Endothelial cell of umbilical vein (primary cell): ENCODE measurements at regions of chr13 and their contacts with region 1.

Region 1: DNA sequence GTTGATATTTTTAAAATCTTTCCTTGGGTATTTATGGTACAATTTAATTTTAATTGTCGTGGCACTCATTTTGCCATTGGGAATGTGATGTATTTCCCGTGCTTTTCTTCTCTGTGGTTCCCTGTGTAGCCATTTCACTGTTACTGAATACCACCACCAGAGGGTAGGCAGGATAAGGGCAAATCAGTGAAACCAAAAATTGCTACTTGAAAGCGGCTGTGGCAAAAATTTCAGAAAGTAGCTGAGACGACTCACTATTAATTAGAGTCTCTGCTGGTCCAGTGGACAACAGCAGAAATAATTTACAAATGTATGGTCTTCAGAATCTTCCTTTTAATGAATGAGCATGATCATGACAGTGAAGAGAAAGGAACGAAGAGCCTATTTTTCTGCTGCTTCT is 34.4 kb upstream of the MIR17HG start:
- DNase-seq: peak; percentile 51
- H3K4me3 ChIP-seq: no peak overlapping the region
- H3K27ac ChIP-seq: no peak overlapping the region
- H3K4me1 ChIP-seq: no peaks in the 10 kb centered on the region
- H3K27me3 ChIP-seq: peaks cover 4 to 20% of the 10 kb centered on the region in 2 experiments
- CTCF ChIP-seq: peak; percentile 31 to 48
- POLR2A ChIP-seq: no peak

Region 2: DNA sequence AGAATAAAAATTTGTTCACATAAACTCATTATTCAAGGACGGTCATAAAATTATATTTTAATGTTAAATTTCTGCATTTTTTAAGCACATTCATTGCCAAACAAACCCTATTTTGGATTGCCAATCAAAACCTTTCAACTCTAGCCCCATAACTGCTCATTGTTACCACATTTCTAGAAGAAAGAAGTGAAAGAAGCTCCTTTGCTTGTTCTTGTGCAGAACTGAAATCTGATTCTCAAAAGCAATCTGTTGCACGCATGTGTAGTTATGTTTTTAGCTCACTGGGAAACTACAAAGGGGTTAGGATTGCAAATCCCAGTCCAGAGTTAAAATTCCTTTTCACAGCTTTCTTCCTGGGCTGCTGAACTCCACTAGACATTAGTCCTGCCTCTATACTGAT is 75.1 kb before region 1 on chr13:
- CTCF ChIA-PET with region 1: no interaction called
- POLR2A ChIA-PET with region 1: no interaction called
- dilution Hi-C with region 1: no loop called
- intact Hi-C with region 1: no loop called
- DNase-seq: no peak
- H3K4me3 ChIP-seq: no peak overlapping the region
- H3K27ac ChIP-seq: no peak overlapping the region
- H3K4me1 ChIP-seq: no peaks in the 10 kb centered on the region
- H3K27me3 ChIP-seq: no peaks in the 10 kb centered on the region
- CTCF ChIP-seq: no peak
- POLR2A ChIP-seq: no peak

Region 3: GRCh38 chr13:91278888-91279287 is 34.2 kb before region 1 on chr13:
- CTCF ChIA-PET with region 1: no interaction called
- POLR2A ChIA-PET with region 1: no interaction called
- dilution Hi-C with region 1: no loop called
- intact Hi-C with region 1: no loop called
- DNase-seq: no peak
- H3K4me3 ChIP-seq: no peak overlapping the region
- H3K27ac ChIP-seq: no peak overlapping the region
- H3K4me1 ChIP-seq: peaks cover 10% of the 10 kb centered on the region
- H3K27me3 ChIP-seq: no peaks in the 10 kb centered on the region
- CTCF ChIP-seq: no peak
- POLR2A ChIP-seq: no peak

Region 4: GRCh38 chr13:91302111-91302510 is 11.0 kb before region 1 on chr13:
- CTCF ChIA-PET with region 1: interaction called, 14 read pairs
- POLR2A ChIA-PET with region 1: no interaction called
- dilution Hi-C with region 1: no loop called
- intact Hi-C with region 1: no loop called
- DNase-seq: no peak
- H3K4me3 ChIP-seq: no peak overlapping the region
- H3K27ac ChIP-seq: no peak overlapping the region
- H3K4me1 ChIP-seq: no peaks in the 10 kb centered on the region
- H3K27me3 ChIP-seq: peaks cover 0 to 4% of the 10 kb centered on the region in 2 experiments
- CTCF ChIP-seq: no peak
- POLR2A ChIP-seq: no peak

Region 5: DNA sequence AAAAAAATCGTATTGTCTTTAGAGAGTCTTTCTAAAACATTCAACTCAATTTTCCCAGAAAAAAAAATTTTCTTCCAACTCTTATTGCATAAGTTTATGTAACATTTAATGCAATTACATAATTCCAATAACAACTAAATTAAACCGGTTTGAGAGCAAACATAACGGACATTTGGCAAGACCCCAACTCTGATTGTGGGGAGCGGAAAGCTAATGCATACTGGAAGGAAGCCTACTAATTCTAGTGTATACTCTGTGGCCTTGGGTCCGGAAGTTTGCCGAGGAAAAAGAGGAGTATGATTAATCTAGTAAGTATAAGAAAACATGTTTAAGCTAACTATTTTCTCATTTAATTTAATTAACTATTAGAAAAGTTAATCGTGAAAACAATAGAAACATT is 13.0 kb after region 1 on chr13:
- CTCF ChIA-PET with region 1: interaction called, 16 read pairs
- POLR2A ChIA-PET with region 1: no interaction called
- dilution Hi-C with region 1: no loop called
- intact Hi-C with region 1: no loop called
- DNase-seq: peak; percentile 75
- H3K4me3 ChIP-seq: peak overlapping the region in 1 of 3 experiments; percentile 32
- H3K27ac ChIP-seq: no peak overlapping the region
- H3K4me1 ChIP-seq: peaks cover 9% of the 10 kb centered on the region
- H3K27me3 ChIP-seq: no peaks in the 10 kb centered on the region
- CTCF ChIP-seq: no peak
- POLR2A ChIP-seq: no peak